SK-N-SH (cell line): ENCODE measurements at regions of chr11 and their contacts with region 1.

Region 1: DNA sequence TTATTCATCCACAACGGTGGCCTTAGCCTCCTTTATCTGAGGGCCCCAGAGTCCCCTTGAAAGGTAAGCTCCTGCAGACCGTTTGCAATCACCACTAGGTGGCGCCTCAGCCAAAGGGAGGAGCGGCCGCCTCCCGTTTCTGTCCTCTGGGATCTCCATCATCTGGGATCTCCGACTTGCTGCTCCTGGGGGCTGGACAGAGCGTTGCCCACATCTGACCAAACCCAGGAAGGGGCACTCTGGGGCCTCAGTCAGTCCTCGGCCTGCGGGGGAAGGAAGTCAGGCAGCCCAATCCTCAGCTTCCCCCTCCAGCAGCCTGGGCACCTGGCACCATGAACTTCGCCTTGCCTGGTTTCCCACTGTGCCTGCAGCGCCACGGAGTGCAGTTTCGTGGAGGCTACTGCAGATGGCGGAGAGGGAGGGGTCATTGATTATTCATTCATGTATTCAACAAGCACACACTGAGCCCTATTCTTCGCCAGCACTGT is 23.5 kb downstream of the TP53I11 start:
- DNase-seq: peak; percentile 82
- H3K4me3 ChIP-seq: peak overlapping the region in 1 of 2 experiments; percentile 21; a peak in 1 of 4 replicates
- H3K27ac ChIP-seq: no peak overlapping the region
- H3K4me1 ChIP-seq: peaks cover 0 to 8% of the 10 kb centered on the region in 2 experiments; a peak in 1 of 4 replicates
- H3K27me3 ChIP-seq: no peaks in the 10 kb centered on the region
- CTCF ChIP-seq: peak; percentile 91
- EP300 ChIP-seq: no peak
- RAD21 ChIP-seq: peak; percentile 68

Region 2: GRCh38 chr11:44611687-44612434 is 315.4 kb before region 1 on chr11:
- CTCF ChIA-PET with region 1: interaction called, 35 read pairs
- POLR2A ChIA-PET with region 1: no interaction called
- DNase-seq: no peak
- H3K4me3 ChIP-seq: no peak overlapping the region
- H3K27ac ChIP-seq: no peak overlapping the region
- H3K4me1 ChIP-seq: peaks cover 0 to 10% of the 10 kb centered on the region in 2 experiments; a peak in 1 of 4 replicates
- H3K27me3 ChIP-seq: no peaks in the 10 kb centered on the region
- CTCF ChIP-seq: no peak
- EP300 ChIP-seq: no peak
- RAD21 ChIP-seq: no peak

Region 3: GRCh38 chr11:44911029-44911814 is 16.0 kb before region 1 on chr11:
- CTCF ChIA-PET with region 1: interaction called, 33 read pairs
- POLR2A ChIA-PET with region 1: no interaction called
- DNase-seq: peak; percentile 83
- H3K4me3 ChIP-seq: no peak overlapping the region; a peak in 1 of 4 replicates
- H3K27ac ChIP-seq: no peak overlapping the region; a peak in 1 of 4 replicates
- H3K4me1 ChIP-seq: peaks cover 0 to 10% of the 10 kb centered on the region in 2 experiments; a peak in 1 of 4 replicates
- H3K27me3 ChIP-seq: 0 out of 2 replicates have a peak, but pooled peaks cover 5% of the 10 kb centered on the region
- CTCF ChIP-seq: peak; percentile 87
- EP300 ChIP-seq: no peak
- RAD21 ChIP-seq: peak; percentile 83

Region 4: GRCh38 chr11:44950625-44951476 is 23.6 kb after region 1 on chr11 and contains the start of gene TP53I11:
- CTCF ChIA-PET with region 1: interaction called, 22 read pairs
- POLR2A ChIA-PET with region 1: no interaction called
- DNase-seq: peak; percentile 94
- H3K4me3 ChIP-seq: peak within 1 kb of the TSS; percentile 77 to 88
- H3K27ac ChIP-seq: peak within 1 kb of the TSS in 1 of 2 experiments; percentile 43; a peak in 1 of 4 replicates
- H3K4me1 ChIP-seq: peaks cover 4% of the 10 kb centered on the region in 2 experiments; a peak in 2 of 4 replicates
- H3K27me3 ChIP-seq: no peaks in the 10 kb centered on the region
- CTCF ChIP-seq: peak; percentile 67
- EP300 ChIP-seq: no peak
- RAD21 ChIP-seq: no peak
- polyA plus RNA-seq, gene TP53I11: 6.0 and 6.6 TPM in 2 replicates

Region 5: GRCh38 chr11:45332276-45332934 is 405.2 kb after region 1 on chr11:
- CTCF ChIA-PET with region 1: interaction called, 16 read pairs
- POLR2A ChIA-PET with region 1: no interaction called
- DNase-seq: peak; percentile 81
- H3K4me3 ChIP-seq: no peak overlapping the region
- H3K27ac ChIP-seq: no peak overlapping the region
- H3K4me1 ChIP-seq: peaks cover 4 to 13% of the 10 kb centered on the region in 2 experiments; a peak in 2 of 4 replicates
- H3K27me3 ChIP-seq: no peaks in the 10 kb centered on the region; the same call in none of the 2 replicates
- CTCF ChIP-seq: peak; percentile 68
- EP300 ChIP-seq: no peak
- RAD21 ChIP-seq: peak; percentile 77

Region 6: DNA sequence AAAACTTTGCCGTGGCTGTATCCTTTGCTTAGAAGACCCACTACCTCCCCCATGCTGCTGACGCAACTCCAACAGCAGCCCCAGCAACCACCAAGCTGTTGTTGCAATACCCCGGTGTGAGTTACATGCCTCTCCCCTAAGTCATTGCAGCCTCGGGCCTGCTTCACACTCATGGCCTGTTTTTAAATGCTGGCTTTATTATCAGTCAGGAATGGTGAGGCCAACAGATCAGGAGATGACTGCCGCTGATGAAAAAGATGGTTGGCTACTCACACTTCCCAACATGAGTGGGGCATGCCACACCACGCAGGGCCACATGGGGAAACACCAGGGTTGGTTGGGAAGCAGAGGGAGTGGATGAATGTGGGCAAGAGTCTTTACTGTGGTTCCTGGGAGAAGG is 530.4 kb after region 1 on chr11:
- CTCF ChIA-PET with region 1: no interaction called
- POLR2A ChIA-PET with region 1: no interaction called
- DNase-seq: no peak
- H3K4me3 ChIP-seq: no peak overlapping the region
- H3K27ac ChIP-seq: no peak overlapping the region
- H3K4me1 ChIP-seq: no peaks in the 10 kb centered on the region
- H3K27me3 ChIP-seq: 0 out of 2 replicates have a peak, but pooled peaks cover 5% of the 10 kb centered on the region
- CTCF ChIP-seq: no peak
- EP300 ChIP-seq: no peak
- RAD21 ChIP-seq: no peak